Mammary epithelial cell (primary cell): ENCODE measurements at regions of chr15 and their contacts with region 1.

Region 1: GRCh38 chr15:58269455-58270414 is 131.6 kb downstream of the AQP9 start:
- DNase-seq: peak; percentile 76
- H3K4me3 ChIP-seq: no peak overlapping the region
- H3K27ac ChIP-seq: peak overlapping the region; percentile 5
- H3K4me1 ChIP-seq: peaks cover 20% of the 10 kb centered on the region
- H3K27me3 ChIP-seq: no peaks in the 10 kb centered on the region
- CTCF ChIP-seq: peak; percentile 68 to 88

Region 2: DNA sequence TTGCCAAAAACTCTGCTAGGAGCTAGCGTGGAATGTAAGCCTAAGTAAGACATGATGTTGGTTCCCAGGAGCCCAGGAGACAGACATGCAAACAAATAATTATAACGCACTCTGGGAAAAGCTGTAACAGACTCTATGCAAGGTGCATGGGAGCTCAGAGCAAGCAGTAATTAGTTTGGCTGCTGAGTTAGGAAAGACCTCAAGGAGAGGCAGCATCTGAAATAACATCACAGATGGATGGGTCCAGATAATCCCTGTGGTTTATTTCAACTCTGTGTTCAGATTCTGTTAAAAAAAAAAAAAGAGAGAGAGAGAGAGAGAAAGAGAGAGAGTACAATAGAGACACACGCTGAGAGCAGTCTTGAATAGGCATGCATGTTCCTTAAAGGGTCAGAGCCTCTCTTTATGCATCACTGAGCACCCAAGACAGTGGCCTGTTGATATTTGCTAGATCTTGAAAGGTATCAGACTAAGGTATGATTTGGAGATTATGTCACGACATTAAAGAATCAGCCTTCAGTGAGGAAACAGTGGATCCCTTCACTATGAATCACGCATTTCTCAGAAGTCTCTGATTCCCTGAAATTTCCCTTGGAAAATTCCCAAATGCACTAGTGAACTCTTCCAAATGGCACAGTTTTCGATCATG is 37.7 kb after region 1 on chr15:
- CTCF ChIA-PET with region 1: no interaction called
- dilution Hi-C with region 1: no loop called
- in situ Hi-C with region 1: no loop called
- intact Hi-C with region 1: no loop called
- DNase-seq: no peak
- H3K4me3 ChIP-seq: no peak overlapping the region
- H3K27ac ChIP-seq: no peak overlapping the region
- H3K4me1 ChIP-seq: peaks cover 10% of the 10 kb centered on the region
- H3K27me3 ChIP-seq: no peaks in the 10 kb centered on the region
- CTCF ChIP-seq: no peak

Region 3: GRCh38 chr15:58440158-58440910 is 170.6 kb after region 1 on chr15:
- CTCF ChIA-PET with region 1: interaction called, 4 read pairs
- dilution Hi-C with region 1: no loop called
- in situ Hi-C with region 1: no loop called
- intact Hi-C with region 1: loop called (anchors 10 kb)
- DNase-seq: peak; percentile 52
- H3K4me3 ChIP-seq: no peak overlapping the region
- H3K27ac ChIP-seq: peak overlapping the region; percentile 93
- H3K4me1 ChIP-seq: peaks cover 36% of the 10 kb centered on the region
- H3K27me3 ChIP-seq: no peaks in the 10 kb centered on the region
- CTCF ChIP-seq: no peak

Region 4: GRCh38 chr15:58559904-58560588 is 290.3 kb after region 1 on chr15:
- CTCF ChIA-PET with region 1: no interaction called
- dilution Hi-C with region 1: no loop called
- in situ Hi-C with region 1: no loop called
- intact Hi-C with region 1: loop called (anchors 1 kb)
- DNase-seq: no peak
- H3K4me3 ChIP-seq: no peak overlapping the region
- H3K27ac ChIP-seq: no peak overlapping the region
- H3K4me1 ChIP-seq: no peaks in the 10 kb centered on the region
- H3K27me3 ChIP-seq: no peaks in the 10 kb centered on the region
- CTCF ChIP-seq: no peak

Region 5: GRCh38 chr15:58585693-58586443 is 316.1 kb after region 1 on chr15:
- CTCF ChIA-PET with region 1: interaction called, 6 read pairs
- dilution Hi-C with region 1: no loop called
- in situ Hi-C with region 1: no loop called
- intact Hi-C with region 1: loop called (anchors 10 kb)
- DNase-seq: no peak
- H3K4me3 ChIP-seq: no peak overlapping the region
- H3K27ac ChIP-seq: no peak overlapping the region
- H3K4me1 ChIP-seq: no peaks in the 10 kb centered on the region
- H3K27me3 ChIP-seq: no peaks in the 10 kb centered on the region
- CTCF ChIP-seq: no peak

Region 6: GRCh38 chr15:58677426-58677825 is 407.7 kb after region 1 on chr15:
- CTCF ChIA-PET with region 1: no interaction called
- dilution Hi-C with region 1: no loop called
- in situ Hi-C with region 1: no loop called
- intact Hi-C with region 1: loop called (anchors 1 kb)
- DNase-seq: no peak
- H3K4me3 ChIP-seq: no peak overlapping the region
- H3K27ac ChIP-seq: no peak overlapping the region
- H3K4me1 ChIP-seq: no peaks in the 10 kb centered on the region
- H3K27me3 ChIP-seq: no peaks in the 10 kb centered on the region
- CTCF ChIP-seq: peak in 1 of 2 donors; percentile 16

Region 7: GRCh38 chr15:58758138-58758537 is 488.4 kb after region 1 on chr15:
- CTCF ChIA-PET with region 1: no interaction called
- dilution Hi-C with region 1: no loop called
- in situ Hi-C with region 1: no loop called
- intact Hi-C with region 1: loop called (anchors 2 kb)
- DNase-seq: no peak
- H3K4me3 ChIP-seq: no peak overlapping the region
- H3K27ac ChIP-seq: no peak overlapping the region
- H3K4me1 ChIP-seq: no peaks in the 10 kb centered on the region
- H3K27me3 ChIP-seq: no peaks in the 10 kb centered on the region
- CTCF ChIP-seq: peak in 1 of 2 donors; percentile 14